ENCODE measurements at regions of chr21 and their contacts with region 1.

Region 1: DNA sequence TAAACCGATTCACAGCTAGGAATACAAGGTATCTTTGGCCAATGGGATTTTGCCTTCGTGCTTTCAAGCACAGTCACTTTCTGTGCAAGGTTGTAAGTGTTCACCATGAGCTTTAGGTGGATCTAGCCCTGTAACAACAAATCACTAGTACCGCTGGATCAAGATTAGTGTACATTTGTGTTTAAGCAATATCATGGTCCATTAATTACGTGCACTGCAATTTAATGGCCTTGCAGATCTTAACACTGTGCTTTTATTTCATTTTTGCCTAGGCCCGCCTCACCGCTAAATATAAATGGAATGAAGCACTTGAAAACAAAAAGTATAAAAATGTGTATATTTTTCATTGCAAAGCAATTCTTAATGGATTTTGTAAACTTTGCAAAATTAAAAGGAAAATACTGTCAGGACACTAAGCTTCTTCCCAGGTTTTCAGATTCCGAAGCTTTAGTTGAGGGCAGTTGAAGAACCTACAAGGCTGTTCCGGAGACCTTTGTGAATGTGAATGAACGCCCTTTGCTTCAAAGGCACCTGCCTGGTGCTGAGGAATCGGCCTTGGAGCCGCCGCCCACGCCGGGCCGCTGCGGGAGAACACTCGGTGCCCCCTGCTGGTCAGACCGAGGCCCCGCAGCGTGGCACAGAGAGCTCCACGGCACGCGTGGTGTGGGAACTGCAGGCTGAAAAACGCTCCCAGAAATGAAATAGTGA is 460.9 kb downstream of the DSCAM start:
- DNase-seq: peak in 9 of 10 donors; percentile 20 to 90 (median 64)

Region 2: GRCh38 chr21:40143822-40144525 is 242.1 kb before region 1 on chr21:
- intact Hi-C with region 1: loop called (anchors 2 kb)
- DNase-seq: peak in 9 of 10 donors; percentile 51 to 94 (median 79)

Region 3: GRCh38 chr21:40587736-40588346 is 201.8 kb after region 1 on chr21:
- intact Hi-C with region 1: no loop called
- DNase-seq: peak in 1 of 10 donors; percentile 37

Region 4: DNA sequence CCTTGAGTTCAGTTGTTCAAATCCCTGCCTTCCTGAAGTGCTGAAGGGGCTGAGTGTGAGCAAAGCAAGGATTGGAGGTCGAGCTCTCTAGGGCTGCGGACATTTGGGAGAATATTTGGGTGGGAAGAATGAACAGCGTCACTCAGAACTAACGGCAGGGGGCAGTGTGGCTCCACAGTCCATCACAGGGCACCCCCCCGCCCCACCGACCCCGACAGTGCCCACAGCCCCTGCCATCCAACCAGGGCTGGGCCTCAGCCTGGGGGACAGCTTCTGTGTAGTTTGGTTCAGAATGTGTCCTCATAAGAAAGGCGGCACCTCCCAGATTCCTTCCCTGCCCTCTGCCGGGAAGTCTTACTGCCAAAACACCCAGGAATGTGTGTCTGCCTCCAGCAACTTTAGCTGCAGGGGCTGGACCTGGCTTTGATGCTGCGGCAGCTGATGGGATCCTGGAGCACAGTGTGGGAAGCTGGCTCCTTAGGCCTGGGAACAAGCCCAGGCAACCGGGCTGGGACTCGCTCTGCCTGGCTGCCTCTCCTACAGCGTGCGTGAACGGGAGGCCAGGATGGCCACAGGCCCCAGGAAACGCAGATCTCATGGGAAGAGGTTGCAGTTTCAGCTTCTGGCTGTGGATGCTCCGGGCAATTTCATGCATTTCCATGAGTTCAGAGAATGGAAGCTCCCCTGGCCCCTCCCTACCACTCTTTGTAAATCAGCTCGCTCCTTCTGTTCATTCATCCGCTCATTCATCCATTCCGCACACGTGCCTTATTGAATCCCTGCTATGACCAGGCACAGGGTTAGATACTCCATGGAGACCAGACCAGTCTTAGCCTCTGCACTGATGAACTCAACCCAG is 1226.9 kb after region 1 on chr21:
- intact Hi-C with region 1: no loop called
- DNase-seq: peak; percentile 43 to 94 (median 66)